ENCODE measurements at regions of chr2 and their contacts with region 1.

Region 1: DNA sequence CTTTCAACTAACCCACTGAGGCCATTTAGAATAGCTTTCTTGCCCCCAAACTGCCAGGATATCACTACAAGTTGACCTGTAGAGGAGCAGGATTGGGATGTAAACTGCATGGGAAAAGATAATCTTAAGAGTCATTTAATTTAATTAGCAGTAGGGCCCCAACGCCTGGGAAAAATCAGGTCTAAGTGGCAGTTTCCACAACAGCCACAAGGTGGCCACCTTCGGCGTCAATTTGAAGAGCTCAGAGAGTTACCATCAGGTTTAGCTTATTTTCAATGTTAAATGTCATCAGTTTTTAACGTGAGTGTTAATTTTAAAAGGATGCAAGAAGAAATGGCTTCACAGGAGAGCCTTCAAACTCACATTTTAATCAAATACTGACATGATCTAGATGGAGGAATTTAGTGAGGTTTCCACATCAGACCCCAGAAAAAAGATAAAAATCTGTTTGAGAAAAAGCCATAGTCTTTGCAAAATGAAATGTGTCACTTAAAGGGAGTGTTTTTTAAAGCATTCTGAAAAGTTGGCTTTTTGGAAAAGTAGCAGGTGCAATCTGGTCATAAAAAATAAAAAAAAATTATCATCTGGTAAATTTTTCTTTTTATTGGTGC is 77.3 kb upstream of the UPP2 start:
- DNase-seq: peak; percentile 41
- CTCF ChIP-seq: peak; percentile 84

Region 2: DNA sequence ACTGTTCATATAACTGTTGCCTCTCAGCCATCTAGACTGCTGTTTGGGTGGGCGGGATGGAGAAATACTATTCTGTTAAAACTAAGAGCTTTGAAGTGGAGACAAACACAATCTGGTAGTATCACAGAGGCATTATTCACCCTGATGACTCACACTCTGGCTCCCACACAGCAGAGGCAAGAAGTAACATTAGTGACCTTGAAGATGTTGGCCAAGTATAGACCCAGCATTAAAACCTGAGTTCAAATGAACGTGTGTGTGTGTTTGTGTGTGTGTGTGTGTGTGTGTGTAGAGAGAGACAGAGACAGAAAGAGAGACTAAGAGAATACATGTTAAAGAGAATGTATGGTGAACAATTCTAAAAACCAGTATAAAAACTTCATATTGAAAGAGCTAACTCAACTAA is 125.8 kb before region 1 on chr2:
- CTCF ChIA-PET with region 1: no interaction called
- POLR2A ChIA-PET with region 1: no interaction called
- DNase-seq: peak; percentile 20
- CTCF ChIP-seq: no peak

Region 3: GRCh38 chr2:157995117-157995516 is 29.3 kb before region 1 on chr2:
- CTCF ChIA-PET with region 1: interaction called, 11 read pairs
- POLR2A ChIA-PET with region 1: no interaction called
- DNase-seq: no peak
- CTCF ChIP-seq: no peak

Region 4: DNA sequence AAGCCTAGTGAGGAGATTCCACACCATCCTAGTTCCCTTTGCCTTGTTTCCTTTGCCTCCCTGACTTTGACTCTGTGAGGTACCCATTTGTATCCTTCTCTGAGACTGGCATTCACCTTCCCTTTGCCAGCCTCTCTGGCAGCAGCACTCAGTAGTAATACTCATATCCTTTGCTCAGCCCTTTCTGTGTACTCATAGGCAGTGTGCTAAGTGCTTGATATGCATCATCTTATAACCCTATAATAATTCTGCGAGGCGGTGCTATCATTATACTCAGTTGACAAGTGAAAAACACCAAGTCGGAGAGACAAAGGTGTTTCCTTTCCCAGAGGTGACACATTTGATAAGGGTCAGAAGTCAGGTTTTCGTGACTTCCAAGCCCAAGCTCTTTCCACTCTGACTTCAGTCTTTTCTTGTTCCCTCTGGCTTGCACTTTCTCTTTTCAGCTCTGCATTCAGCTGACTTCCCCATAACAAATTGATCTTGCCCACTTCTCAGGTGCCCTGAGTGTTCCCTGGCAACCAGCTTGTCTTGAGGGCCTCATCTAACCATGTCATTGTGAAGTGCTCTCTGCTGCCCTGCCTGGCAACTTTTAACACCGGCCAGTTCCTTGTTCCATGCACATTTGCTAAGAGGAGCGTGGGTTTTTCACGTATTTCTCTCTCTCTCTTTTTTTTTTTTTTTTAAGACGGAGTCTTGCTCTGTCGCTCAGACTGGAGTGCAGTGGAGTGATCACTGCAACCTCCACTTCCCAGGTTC is 17.3 kb before region 1 on chr2:
- CTCF ChIA-PET with region 1: interaction called, 49 read pairs
- POLR2A ChIA-PET with region 1: no interaction called
- DNase-seq: no peak
- CTCF ChIP-seq: no peak

Region 5: DNA sequence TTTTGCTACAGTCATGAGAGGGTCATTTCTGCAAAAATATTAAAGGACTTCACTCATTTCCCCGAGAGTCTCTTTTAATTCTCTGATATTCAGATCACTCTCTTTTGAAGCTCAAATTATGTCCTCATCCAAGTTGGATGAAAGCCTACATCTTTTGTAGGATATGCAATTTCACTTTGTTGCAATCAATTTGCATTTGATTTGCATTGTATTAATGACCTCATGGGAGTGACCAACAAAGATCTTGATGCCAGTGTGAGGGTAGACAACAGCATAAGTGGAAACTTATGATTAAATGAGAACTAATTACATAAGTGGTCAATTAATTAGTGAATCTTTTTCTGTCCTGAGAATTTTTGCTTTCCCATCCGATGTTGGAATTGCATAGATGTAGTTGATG is 17.0 kb after region 1 on chr2:
- CTCF ChIA-PET with region 1: interaction called, 58 read pairs
- POLR2A ChIA-PET with region 1: no interaction called
- DNase-seq: no peak
- CTCF ChIP-seq: no peak

Region 6: DNA sequence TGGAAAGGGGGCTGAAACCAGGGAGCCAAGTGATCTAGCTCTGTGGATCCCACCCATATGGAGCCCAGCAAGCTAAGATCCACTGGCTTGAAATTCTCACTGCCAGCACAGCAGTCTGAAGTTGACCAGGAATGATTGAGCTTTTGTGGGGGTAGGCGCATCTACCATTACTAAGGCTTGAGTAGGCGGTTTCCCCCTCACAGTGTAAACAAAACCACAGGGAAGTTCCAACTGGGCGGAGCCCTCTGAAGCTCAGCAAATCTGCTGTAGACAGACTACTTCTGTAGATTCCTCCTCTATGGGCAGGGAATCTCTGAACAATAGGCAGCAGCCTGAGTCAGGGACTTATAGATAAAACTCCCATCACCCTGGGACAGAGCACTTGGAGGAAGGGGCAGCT is 335.4 kb after region 1 on chr2:
- CTCF ChIA-PET with region 1: no interaction called
- POLR2A ChIA-PET with region 1: no interaction called
- DNase-seq: no peak
- CTCF ChIP-seq: no peak

Region 7: DNA sequence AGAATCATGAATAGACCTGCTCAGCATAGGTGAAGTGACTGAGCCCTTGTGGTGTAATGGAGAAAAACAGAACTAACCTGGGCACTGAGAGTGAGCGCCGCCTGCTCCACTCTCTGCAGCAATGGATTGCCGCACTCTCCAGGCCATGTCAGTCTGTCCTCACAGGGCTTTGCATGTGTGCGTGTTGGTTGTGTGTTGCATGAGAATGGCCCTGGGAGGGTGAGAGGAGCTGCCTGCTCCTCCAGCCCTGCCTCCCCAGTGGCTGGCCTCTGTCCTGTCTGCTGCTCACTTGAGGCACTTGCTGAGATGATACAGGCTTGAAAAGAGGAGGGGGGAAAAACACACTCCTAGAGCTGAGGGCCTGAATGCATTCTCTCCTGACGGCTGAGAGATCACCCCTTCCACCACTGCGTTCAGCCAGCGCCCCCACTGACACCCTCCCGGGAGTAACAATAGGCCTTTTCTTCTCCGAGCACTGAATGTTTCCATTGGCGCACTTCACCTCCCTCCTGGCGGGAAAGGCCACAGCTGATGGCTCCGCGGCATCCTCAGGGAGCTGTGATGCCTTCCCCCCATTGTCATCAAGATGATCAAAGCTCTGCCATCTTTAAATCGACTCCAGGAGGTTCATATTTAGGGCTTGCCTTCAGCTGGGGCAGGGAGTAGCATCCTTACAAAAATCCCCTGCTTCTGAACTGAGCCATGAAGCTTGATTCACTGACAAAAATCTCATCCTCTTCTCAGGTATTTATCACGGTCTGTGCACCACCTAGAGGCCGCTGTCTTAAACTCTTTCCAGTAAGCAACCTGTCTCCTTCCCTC is 720.9 kb after region 1 on chr2:
- CTCF ChIA-PET with region 1: interaction called, 117 read pairs
- POLR2A ChIA-PET with region 1: no interaction called
- DNase-seq: peak; percentile 47
- CTCF ChIP-seq: peak; percentile 57

Region 8: DNA sequence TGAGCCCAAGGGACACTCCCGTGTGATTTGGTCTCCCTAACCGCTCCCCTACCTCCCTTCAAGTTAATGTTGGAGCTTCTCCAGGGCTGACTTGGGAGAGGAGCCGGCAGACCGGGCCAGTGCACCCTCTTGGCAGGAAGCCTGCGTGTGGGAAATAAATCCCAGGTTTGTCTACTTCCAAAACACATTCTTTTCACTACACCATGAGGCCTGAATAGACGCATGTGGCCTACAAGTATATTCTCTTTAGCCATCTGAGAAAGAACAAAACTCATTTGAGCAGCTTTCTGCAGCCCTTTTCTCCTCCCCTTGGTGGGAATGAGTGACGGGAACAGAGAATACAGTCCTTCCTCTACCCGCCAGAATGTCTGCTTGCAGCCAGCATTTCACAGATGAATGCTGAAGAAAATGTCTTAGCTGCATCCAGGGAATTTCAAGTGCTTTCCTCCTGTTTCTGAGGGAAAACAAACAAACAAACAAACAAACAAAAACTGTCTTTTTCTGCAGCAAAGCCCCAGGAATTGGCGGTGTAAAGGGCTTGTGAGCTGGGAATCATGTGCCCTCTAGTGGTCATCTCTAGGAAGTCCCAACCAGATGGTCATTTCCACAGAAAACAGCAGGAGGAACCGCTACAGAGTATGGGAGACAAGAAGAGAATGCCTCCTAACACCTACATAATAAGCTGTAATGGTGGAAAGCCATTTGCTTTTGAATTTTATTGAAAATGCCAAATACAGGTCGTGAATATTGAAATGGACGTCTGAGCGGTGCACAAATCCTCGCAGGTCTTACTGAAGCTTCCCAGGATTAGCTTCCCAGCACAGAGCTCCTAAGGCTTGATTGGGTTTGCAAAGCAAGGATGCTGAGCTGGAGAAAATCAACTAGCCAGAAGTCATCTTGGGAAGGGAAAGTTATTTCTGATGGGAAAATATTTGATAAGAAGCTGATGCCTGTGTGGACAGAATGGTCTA is 729.5 kb after region 1 on chr2:
- CTCF ChIA-PET with region 1: interaction called, 117 read pairs
- POLR2A ChIA-PET with region 1: no interaction called
- DNase-seq: peak; percentile 70
- CTCF ChIP-seq: peak; percentile 81

Region 9: DNA sequence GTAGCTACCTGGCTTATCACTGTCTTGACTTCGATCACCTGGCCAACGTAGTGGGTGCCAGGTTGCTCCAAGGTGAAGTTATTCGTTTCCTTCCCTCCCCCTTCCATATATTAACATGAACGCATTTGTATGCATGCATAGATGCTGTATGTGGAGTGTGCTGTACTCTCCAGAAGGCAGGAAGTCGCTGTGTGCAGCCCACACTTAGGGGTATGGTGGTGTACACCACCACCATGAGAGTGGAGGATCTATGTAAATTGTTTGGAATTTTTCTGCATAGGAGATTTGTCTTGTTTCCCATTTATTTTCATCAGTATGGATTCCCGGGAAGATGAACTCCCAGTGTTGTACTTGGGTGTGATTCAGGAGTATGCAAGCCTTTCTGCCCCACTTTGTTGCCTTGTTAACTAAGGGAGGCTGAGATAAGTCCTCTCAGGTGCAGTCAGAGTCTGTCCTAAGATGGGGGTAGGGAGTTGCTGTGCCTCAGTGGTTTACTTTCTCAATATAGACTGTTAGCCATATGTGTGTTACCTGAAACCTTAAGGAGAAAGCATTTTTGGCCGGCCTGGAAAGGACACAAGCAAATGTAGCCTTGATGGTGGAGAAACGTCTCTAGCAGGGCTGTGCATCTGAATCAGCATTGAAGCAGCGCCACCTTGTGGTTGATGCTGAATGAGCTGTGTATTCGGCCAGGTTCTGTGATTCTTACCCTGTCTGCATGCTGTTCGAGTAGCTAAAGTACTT is 1093.9 kb after region 1 on chr2:
- CTCF ChIA-PET with region 1: interaction called, 13 read pairs
- POLR2A ChIA-PET with region 1: no interaction called
- DNase-seq: peak; percentile 68
- CTCF ChIP-seq: peak; percentile 89